ENCODE measurements at regions of chr4 and their contacts with region 1.

Region 1: GRCh38 chr4:156378033-156378665 is 424.5 kb upstream of the CTSO start:
- DNase-seq: peak in 1 of 2 experiments; percentile 48
- H3K4me3 ChIP-seq: no peak overlapping the region
- H3K27ac ChIP-seq: no peak overlapping the region
- H3K4me1 ChIP-seq: peaks cover 0 to 2% (median 0%) of the 10 kb centered on the region in 4 experiments; a peak in 1 of 7 replicates
- H3K27me3 ChIP-seq: no peaks in the 10 kb centered on the region; a peak in 1 of 7 replicates
- CTCF ChIP-seq: peak; percentile 44 to 79 (median 72)
- EP300 ChIP-seq: no peak
- POLR2A ChIP-seq: no peak
- RAD21 ChIP-seq: peak; percentile 82 to 85

Region 2: DNA sequence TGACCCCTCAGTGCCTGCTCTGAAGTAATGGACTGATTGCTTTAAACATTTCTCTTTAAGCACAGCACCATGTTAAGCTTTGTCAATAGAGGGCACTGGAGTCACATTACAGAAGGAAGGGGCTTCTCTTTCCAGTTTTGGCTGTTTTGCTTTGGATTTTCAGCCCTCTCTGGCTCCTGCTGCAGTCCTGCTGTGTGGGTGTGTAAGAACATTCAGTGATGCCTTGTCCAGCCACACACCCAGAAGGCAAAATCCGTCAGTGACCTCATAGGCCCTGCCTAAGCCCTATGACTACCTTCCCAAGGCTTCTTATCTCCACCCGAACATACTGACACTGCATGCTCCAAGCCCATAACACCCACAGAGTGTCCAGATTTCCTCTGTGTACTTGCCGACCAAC is 209.1 kb before region 1 on chr4:
- CTCF ChIA-PET with region 1: interaction called, 20 read pairs
- POLR2A ChIA-PET with region 1: no interaction called
- DNase-seq: peak; percentile 17 to 46
- H3K4me3 ChIP-seq: no peak overlapping the region
- H3K27ac ChIP-seq: no peak overlapping the region
- H3K4me1 ChIP-seq: peaks cover 0 to 2% (median 0%) of the 10 kb centered on the region in 4 experiments; a peak in 1 of 7 replicates
- H3K27me3 ChIP-seq: no peaks in the 10 kb centered on the region
- CTCF ChIP-seq: peak in 2 of 3 experiments; percentile 65 to 76; a peak in 3 of 4 replicates
- EP300 ChIP-seq: no peak
- POLR2A ChIP-seq: no peak
- RAD21 ChIP-seq: peak; percentile 88 to 91

Region 3: GRCh38 chr4:156294577-156294976 is 83.6 kb before region 1 on chr4:
- CTCF ChIA-PET with region 1: interaction called, 19 read pairs
- POLR2A ChIA-PET with region 1: no interaction called
- DNase-seq: peak in 1 of 2 experiments; percentile 13
- H3K4me3 ChIP-seq: no peak overlapping the region
- H3K27ac ChIP-seq: no peak overlapping the region
- H3K4me1 ChIP-seq: peaks cover 0 to 3% (median 0%) of the 10 kb centered on the region in 4 experiments; a peak in 1 of 7 replicates
- H3K27me3 ChIP-seq: no peaks in the 10 kb centered on the region
- CTCF ChIP-seq: peak in 2 of 3 experiments; percentile 44 to 54; a peak in 2 of 4 replicates
- EP300 ChIP-seq: no peak
- POLR2A ChIP-seq: no peak
- RAD21 ChIP-seq: peak; percentile 74 to 75

Region 4: DNA sequence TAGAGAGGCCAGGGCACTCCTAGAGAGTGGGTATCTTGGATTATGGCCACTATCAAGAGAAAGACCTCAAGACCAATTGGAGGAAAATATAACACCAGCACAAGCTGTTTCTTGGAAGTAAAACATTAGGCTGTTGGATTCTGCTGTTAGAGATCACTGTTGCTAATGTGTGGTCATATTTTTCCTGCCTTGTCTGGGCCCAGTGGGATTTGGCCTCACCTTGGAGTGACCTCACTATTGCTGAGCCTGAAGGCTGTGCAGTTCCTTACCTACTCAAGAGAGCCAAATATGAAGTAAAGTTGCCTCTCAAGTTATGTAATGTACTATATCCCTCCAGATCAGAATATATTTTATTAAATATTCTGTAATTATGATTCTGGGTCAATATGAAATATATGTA is 69.1 kb before region 1 on chr4:
- CTCF ChIA-PET with region 1: no interaction called
- POLR2A ChIA-PET with region 1: no interaction called
- DNase-seq: no peak
- H3K4me3 ChIP-seq: no peak overlapping the region
- H3K27ac ChIP-seq: no peak overlapping the region
- H3K4me1 ChIP-seq: peaks cover 0 to 3% (median 0%) of the 10 kb centered on the region in 4 experiments; a peak in 1 of 7 replicates
- H3K27me3 ChIP-seq: no peaks in the 10 kb centered on the region
- CTCF ChIP-seq: no peak
- EP300 ChIP-seq: no peak
- POLR2A ChIP-seq: no peak
- RAD21 ChIP-seq: no peak

Measured in H1 (cell line).